Esophagus muscularis mucosa (tissue), 4 donors: ENCODE measurements at regions of chr17 and their contacts with region 1.

Region 1: DNA sequence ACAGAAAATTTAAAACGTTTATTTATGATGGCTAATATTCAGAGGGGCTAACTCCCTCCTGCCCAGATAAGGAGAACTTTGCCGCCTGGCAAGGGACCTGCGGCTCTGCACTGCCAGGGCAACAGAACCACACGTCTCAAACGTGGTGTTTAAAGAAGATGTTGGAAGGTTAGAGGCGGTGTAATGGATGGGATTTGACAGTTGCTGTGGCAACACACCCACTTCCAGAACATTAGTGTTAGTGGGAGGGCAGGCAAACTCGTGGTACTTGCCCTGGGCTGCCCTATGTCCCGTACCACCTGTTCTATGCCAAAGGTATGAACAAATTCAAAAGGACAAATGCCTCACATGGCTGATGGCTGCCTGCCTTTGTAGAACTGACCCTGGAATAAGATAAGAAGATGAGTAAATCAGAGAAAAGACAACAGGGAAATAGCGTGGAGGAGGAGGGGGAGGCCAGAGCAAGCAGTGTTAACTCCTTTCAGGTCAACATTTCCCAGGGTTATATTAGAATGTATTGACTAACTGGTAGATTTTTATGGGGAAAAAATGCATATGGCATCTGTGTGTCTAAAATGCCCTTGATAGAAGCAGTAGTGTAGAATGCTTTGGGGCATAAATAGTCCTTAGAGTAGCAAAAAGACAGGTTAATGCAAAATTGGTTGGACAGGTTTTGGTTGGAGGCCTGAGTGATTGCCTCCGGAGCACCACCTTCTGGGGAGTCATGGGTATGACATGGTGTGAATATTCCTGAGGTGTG is 30.8 kb downstream of the HLF start:
- DNase-seq: no peak
- H3K4me3 ChIP-seq: peak overlapping the region in 1 of 4 donors; percentile 16
- H3K27ac ChIP-seq: peak overlapping the region; percentile 77 to 99 (median 95)
- H3K4me1 ChIP-seq: peaks cover 22 to 65% (median 45%) of the 10 kb centered on the region in 4 donors
- H3K27me3 ChIP-seq: no peaks in the 10 kb centered on the region
- CTCF ChIP-seq: peak; percentile 87 to 95 (median 87)
- EP300 ChIP-seq: peak; percentile 88
- POLR2A ChIP-seq: no peak

Region 2: DNA sequence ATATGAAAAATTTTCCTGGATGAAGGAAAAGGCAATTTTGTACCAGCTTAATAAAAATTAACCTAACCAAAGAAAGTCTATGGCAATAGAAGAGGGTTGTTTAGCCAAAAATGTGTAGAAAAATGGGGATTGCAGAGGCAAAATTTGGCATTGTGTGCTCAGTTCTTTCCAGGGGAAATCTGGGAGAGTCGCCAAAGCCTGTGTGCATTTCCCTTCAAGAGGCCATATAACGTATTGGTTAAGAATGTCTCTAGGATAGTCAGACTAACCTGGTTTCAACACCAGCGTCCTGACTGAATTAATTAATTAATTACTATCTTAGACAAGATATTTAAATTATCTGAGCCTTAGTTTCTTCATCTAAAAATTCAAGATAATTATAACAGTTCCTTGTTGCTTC is 75.7 kb before region 1 on chr17:
- intact Hi-C with region 1: no loop called
- DNase-seq: peak; percentile 64
- H3K4me3 ChIP-seq: no peak overlapping the region
- H3K27ac ChIP-seq: no peak overlapping the region
- H3K4me1 ChIP-seq: no peaks in the 10 kb centered on the region
- H3K27me3 ChIP-seq: no peaks in the 10 kb centered on the region
- CTCF ChIP-seq: no peak
- EP300 ChIP-seq: no peak
- POLR2A ChIP-seq: no peak

Region 3: GRCh38 chr17:55264645-55265298 is 30.8 kb before region 1 on chr17 and contains the start of gene HLF:
- intact Hi-C with region 1: loop called (anchors 5 kb)
- DNase-seq: peak; percentile 93
- H3K4me3 ChIP-seq: peak within 1 kb of the TSS; percentile 70 to 87 (median 76)
- H3K27ac ChIP-seq: peak within 1 kb of the TSS; percentile 92 to 99 (median 98)
- H3K4me1 ChIP-seq: peaks cover 13 to 38% (median 33%) of the 10 kb centered on the region in 4 donors
- H3K27me3 ChIP-seq: no peaks in the 10 kb centered on the region
- CTCF ChIP-seq: peak in 1 of 3 experiments; percentile 4
- EP300 ChIP-seq: no peak
- POLR2A ChIP-seq: no peak
- total RNA-seq, gene HLF: 137 to 176 (median 154) TPM

Region 4: GRCh38 chr17:55444471-55445441 is 149.2 kb after region 1 on chr17:
- intact Hi-C with region 1: no loop called
- DNase-seq: no peak
- H3K4me3 ChIP-seq: no peak overlapping the region
- H3K27ac ChIP-seq: peak overlapping the region; percentile 78 to 92 (median 86)
- H3K4me1 ChIP-seq: peaks cover 14 to 85% (median 81%) of the 10 kb centered on the region in 4 donors
- H3K27me3 ChIP-seq: no peaks in the 10 kb centered on the region
- CTCF ChIP-seq: no peak
- EP300 ChIP-seq: no peak
- POLR2A ChIP-seq: no peak